HepG2 (cell line): ENCODE measurements at regions of chr10 and their contacts with region 1.

Region 1: GRCh38 chr10:123559066-123559822 is 106.9 kb upstream of the GPR26 start:
- DNase-seq: peak; percentile 36
- ATAC-seq: peak; percentile 94
- H3K4me3 ChIP-seq: no peak overlapping the region
- H3K27ac ChIP-seq: no peak overlapping the region
- H3K4me1 ChIP-seq: no peaks in the 10 kb centered on the region
- H3K27me3 ChIP-seq: peaks cover 0 to 11% of the 10 kb centered on the region in 2 experiments; a peak in 1 of 5 replicates
- CTCF ChIP-seq: peak; percentile 97
- EP300 ChIP-seq: no peak
- POLR2A ChIP-seq: no peak
- RAD21 ChIP-seq: peak; percentile 92

Region 2: DNA sequence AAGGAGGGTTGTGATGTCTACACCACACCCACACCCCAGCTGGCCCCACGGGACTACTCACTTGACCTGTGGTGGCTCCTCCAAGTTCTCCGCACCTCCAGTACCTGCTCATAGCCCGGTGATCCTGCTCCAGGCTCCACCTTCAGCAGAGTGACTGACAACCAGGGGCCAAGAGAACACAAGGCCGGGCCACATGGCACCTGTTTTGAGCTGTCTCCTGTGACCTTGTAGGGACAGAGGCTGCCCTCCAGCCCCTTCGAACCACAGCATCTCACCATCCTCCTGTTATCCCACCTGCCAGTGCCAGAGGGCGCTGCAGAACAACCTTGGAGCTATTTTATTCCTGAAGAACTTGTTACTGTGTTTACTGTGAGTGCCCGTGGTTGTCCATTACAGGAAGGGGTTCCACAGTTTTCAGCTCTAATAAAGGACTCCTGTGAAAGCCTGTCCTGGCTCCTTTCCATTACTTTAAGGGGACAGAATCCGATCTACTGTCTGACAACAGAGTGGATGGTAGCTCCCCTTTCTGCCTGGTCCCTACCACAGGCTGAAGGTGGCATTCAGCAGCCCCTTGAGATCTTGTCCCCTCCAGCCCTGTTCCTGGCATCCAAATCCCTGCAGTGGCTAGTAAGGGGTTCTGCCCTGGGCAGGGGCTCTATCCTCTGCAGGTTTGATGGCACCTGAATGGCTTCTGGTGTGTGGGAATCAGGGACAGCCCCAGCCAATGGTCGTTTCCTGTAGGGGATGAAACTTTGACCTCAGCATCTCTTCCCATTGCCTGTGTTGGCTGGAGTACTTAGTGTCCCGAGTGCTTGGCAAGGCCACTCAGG is 910.4 kb before region 1 on chr10:
- CTCF ChIA-PET with region 1: no interaction called
- POLR2A ChIA-PET with region 1: no interaction called
- in situ Hi-C with region 1: loop called (anchors 25 kb)
- intact Hi-C with region 1: no loop called
- DNase-seq: peak; percentile 49
- ATAC-seq: peak; percentile 82
- H3K4me3 ChIP-seq: no peak overlapping the region
- H3K27ac ChIP-seq: no peak overlapping the region
- H3K4me1 ChIP-seq: no peaks in the 10 kb centered on the region
- H3K27me3 ChIP-seq: peaks cover 4 to 10% of the 10 kb centered on the region in 2 experiments; a peak in 3 of 5 replicates
- CTCF ChIP-seq: peak; percentile 77
- EP300 ChIP-seq: no peak
- POLR2A ChIP-seq: no peak
- RAD21 ChIP-seq: no peak

Region 3: GRCh38 chr10:123043409-123043925 is 515.8 kb before region 1 on chr10:
- CTCF ChIA-PET with region 1: interaction called, 15 read pairs
- POLR2A ChIA-PET with region 1: no interaction called
- in situ Hi-C with region 1: loop called (anchors 10 kb)
- intact Hi-C with region 1: no loop called
- DNase-seq: peak; percentile 71
- ATAC-seq: peak; percentile 94
- H3K4me3 ChIP-seq: no peak overlapping the region
- H3K27ac ChIP-seq: no peak overlapping the region
- H3K4me1 ChIP-seq: peaks cover 18% of the 10 kb centered on the region
- H3K27me3 ChIP-seq: no peaks in the 10 kb centered on the region
- CTCF ChIP-seq: peak; percentile 85
- EP300 ChIP-seq: no peak
- POLR2A ChIP-seq: no peak
- RAD21 ChIP-seq: peak; percentile 76

Region 4: DNA sequence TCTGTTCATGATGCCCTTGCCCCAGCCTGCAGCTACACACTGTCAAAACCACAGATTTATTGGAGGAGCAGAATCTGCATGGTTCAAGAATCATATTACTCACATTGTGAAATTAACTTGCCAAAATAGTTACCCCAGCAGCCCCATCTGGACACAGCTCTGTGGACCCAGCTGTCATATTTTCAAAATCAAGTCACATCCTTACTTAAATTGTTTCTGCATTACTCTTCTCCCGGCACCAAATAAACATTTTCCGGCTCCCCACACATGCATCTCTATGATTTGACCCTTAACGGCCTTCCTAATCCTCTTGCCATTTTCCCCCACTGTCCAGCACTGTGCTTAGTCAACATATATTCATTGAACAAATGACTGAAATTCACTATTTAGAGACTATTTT is 63.1 kb after region 1 on chr10:
- CTCF ChIA-PET with region 1: no interaction called
- POLR2A ChIA-PET with region 1: no interaction called
- in situ Hi-C with region 1: no loop called
- intact Hi-C with region 1: no loop called
- DNase-seq: no peak
- ATAC-seq: no peak
- H3K4me3 ChIP-seq: no peak overlapping the region
- H3K27ac ChIP-seq: no peak overlapping the region
- H3K4me1 ChIP-seq: no peaks in the 10 kb centered on the region
- H3K27me3 ChIP-seq: peaks cover 0 to 3% of the 10 kb centered on the region in 2 experiments; a peak in 1 of 5 replicates
- CTCF ChIP-seq: no peak
- EP300 ChIP-seq: no peak
- POLR2A ChIP-seq: no peak
- RAD21 ChIP-seq: no peak